ENCODE measurements at regions of chr2 and their contacts with region 1.

Region 1: DNA sequence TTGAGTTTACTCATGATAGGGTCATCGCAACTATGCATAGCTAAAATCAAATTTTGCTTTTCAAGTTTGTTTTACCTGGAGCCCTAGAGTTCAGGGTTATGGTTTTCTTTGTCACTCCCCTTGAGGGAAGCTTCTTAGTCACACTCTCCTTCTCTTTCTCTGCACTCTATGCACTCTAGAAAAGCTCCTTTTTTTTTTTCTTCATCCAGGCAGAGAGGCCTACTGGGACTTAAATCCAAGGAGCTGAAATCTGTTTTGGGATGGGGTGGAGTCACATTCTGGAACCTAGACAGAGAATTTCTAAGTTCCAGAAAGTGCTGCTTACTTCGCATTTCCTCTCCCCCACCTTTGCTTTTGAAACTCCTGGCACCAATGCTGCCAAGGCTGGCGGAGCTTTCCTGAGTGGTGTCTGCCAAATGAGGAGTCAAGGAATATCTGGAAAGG is 19.1 kb upstream of the IL18R1 start:
- DNase-seq: peak in 1 of 5 donors; percentile 34
- ATAC-seq: peak in 3 of 4 donors; percentile 72 to 86 (median 75)
- H3K4me3 ChIP-seq: peak overlapping the region in 6 of 12 donors; percentile 1 to 34 (median 28)
- H3K27ac ChIP-seq: peak overlapping the region in 11 of 12 donors; percentile 2 to 75 (median 33)
- H3K4me1 ChIP-seq: peaks cover 0 to 25% (median 9%) of the 10 kb centered on the region in 12 donors
- H3K27me3 ChIP-seq: no peaks in the 10 kb centered on the region
- CTCF ChIP-seq: no peak
- POLR2A ChIP-seq: no peak

Region 2: GRCh38 chr2:102251042-102251848 is 85.3 kb before region 1 on chr2:
- intact Hi-C with region 1: loop called in 3 of 10 experiments (anchors 5 to 10 kb)
- DNase-seq: peak; percentile 51 to 81 (median 63)
- ATAC-seq: peak; percentile 63 to 86 (median 78)
- H3K4me3 ChIP-seq: peak overlapping the region in 11 of 12 donors; percentile 25 to 61 (median 45)
- H3K27ac ChIP-seq: peak overlapping the region in 3 of 12 donors; percentile 15 to 74 (median 45)
- H3K4me1 ChIP-seq: peaks cover 0 to 29% (median 7%) of the 10 kb centered on the region in 12 donors
- H3K27me3 ChIP-seq: peaks cover 0 to 19% (median 3%) of the 10 kb centered on the region in 9 donors
- CTCF ChIP-seq: peak; percentile 53 to 78 (median 66)
- POLR2A ChIP-seq: no peak

Region 3: DNA sequence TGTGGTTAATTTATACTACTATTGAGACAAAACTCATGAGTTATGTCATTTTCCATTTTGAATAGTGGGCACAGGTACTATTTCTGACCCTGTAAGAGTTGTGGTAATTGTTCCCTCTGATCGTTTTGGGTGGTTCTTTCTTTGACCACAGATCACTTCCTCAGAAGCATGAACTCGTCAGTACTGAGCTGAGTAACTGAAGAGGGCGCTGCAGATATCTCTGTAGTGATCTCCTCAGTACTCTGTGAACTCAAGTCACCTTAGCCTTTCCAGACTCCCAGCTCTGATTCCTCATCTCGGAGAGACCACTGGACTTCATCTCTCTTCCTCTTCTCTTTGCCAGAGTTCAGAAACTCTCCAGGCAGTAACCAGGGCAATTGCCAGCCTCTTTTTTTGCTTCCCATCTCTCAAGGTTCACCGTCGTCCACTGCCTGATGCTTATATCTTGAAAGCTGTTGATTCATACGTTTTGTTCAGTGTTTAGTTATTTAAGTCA is 34.6 kb before region 1 on chr2:
- intact Hi-C with region 1: loop called in 1 of 10 experiments (anchors 5 kb)
- DNase-seq: peak in 1 of 5 donors; percentile 22
- ATAC-seq: peak in 3 of 4 donors; percentile 62 to 83 (median 78)
- H3K4me3 ChIP-seq: no peak overlapping the region
- H3K27ac ChIP-seq: no peak overlapping the region
- H3K4me1 ChIP-seq: peaks cover 0 to 6% (median 0%) of the 10 kb centered on the region in 12 donors
- H3K27me3 ChIP-seq: peaks cover 0 to 68% (median 5%) of the 10 kb centered on the region in 9 donors
- CTCF ChIP-seq: peak in 8 of 12 donors; percentile 12 to 43 (median 28)
- POLR2A ChIP-seq: no peak